ENCODE measurements at regions of chr4 and their contacts with region 1.

Region 1: GRCh38 chr4:138035781-138036258 is 206.3 kb downstream of the SLC7A11 start:
- DNase-seq: peak; percentile 80
- H3K4me3 ChIP-seq: no peak overlapping the region
- H3K27ac ChIP-seq: peak overlapping the region; percentile 76
- H3K4me1 ChIP-seq: peaks cover 35% of the 10 kb centered on the region
- H3K27me3 ChIP-seq: no peaks in the 10 kb centered on the region
- CTCF ChIP-seq: peak; percentile 36 to 68
- POLR2A ChIP-seq: no peak

Region 2: DNA sequence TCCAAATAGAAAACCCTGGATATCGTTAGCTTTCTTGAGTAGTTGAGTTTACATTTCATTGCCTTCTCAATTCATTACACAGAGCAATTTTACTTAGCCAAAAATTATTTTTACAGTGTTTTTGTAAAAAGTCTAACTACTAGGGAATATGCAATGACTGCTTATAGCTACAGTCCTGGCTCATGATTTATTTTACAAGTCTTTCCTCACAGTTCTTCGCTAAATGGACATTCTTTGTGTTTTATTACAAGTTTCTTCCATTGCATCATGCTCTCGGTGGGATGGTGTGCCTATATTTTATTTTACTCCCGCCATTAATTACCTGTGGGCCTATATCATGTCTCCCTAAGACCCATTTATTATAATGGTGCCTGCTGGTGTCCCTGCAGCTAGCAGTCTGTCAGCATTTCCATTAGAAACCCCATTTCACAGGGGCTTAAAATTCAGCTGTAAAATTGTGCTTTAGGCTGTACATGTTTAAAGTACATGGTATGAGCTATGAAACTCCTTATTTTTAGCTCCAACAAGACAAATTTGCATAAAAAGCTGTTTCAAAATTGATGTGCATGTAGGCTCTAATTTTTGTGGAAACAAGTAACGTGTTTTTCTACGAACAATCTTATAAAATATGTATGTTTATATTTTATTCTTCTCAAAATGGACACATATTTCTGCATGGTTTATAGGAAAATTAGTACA is 21.1 kb before region 1 on chr4:
- CTCF ChIA-PET with region 1: no interaction called
- POLR2A ChIA-PET with region 1: no interaction called
- dilution Hi-C with region 1: no loop called
- intact Hi-C with region 1: no loop called
- DNase-seq: no peak
- H3K4me3 ChIP-seq: no peak overlapping the region
- H3K27ac ChIP-seq: no peak overlapping the region
- H3K4me1 ChIP-seq: no peaks in the 10 kb centered on the region
- H3K27me3 ChIP-seq: no peaks in the 10 kb centered on the region
- CTCF ChIP-seq: no peak
- POLR2A ChIP-seq: no peak

Region 3: DNA sequence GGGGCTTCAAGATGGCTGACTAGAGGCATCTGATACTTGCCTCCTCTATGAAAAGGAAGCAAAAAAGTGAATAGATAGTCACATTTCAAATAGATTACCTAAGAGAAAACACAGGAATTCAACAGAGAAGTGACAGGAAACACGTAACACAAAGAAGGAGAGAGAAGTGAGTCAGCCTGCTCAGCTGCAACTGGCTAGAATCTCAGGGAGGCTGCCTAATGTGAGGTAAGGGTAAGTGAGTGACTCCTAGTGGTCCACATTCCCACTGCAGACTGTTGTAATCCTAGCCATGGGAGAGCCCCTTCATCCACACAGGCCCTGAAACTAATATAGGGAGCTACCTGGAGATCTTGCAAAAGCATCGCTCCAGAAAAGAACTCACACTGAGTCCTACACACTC is 27.1 kb after region 1 on chr4:
- CTCF ChIA-PET with region 1: interaction called, 34 read pairs
- POLR2A ChIA-PET with region 1: interaction called, 3 read pairs
- dilution Hi-C with region 1: no loop called
- intact Hi-C with region 1: loop called (anchors 1 kb)
- DNase-seq: peak; percentile 65
- H3K4me3 ChIP-seq: no peak overlapping the region
- H3K27ac ChIP-seq: peak overlapping the region; percentile 55
- H3K4me1 ChIP-seq: peaks cover 8% of the 10 kb centered on the region
- H3K27me3 ChIP-seq: no peaks in the 10 kb centered on the region
- CTCF ChIP-seq: peak; percentile 28 to 32
- POLR2A ChIP-seq: no peak

Region 4: GRCh38 chr4:138182838-138183426 is 147.1 kb after region 1 on chr4:
- CTCF ChIA-PET with region 1: interaction called, 82 read pairs
- POLR2A ChIA-PET with region 1: interaction called, 3 read pairs
- dilution Hi-C with region 1: no loop called
- intact Hi-C with region 1: loop called (anchors 1 kb)
- DNase-seq: peak; percentile 85
- H3K4me3 ChIP-seq: no peak overlapping the region
- H3K27ac ChIP-seq: no peak overlapping the region
- H3K4me1 ChIP-seq: peaks cover 14% of the 10 kb centered on the region
- H3K27me3 ChIP-seq: no peaks in the 10 kb centered on the region
- CTCF ChIP-seq: peak; percentile 43 to 48
- POLR2A ChIP-seq: no peak

Region 5: GRCh38 chr4:138522366-138522765 is 486.5 kb after region 1 on chr4:
- CTCF ChIA-PET with region 1: interaction called, 32 read pairs
- POLR2A ChIA-PET with region 1: no interaction called
- dilution Hi-C with region 1: no loop called
- intact Hi-C with region 1: loop called (anchors 1 kb)
- DNase-seq: peak; percentile 21
- H3K4me3 ChIP-seq: no peak overlapping the region
- H3K27ac ChIP-seq: no peak overlapping the region
- H3K4me1 ChIP-seq: no peaks in the 10 kb centered on the region
- H3K27me3 ChIP-seq: no peaks in the 10 kb centered on the region
- CTCF ChIP-seq: peak; percentile 27 to 40
- POLR2A ChIP-seq: no peak

Region 6: DNA sequence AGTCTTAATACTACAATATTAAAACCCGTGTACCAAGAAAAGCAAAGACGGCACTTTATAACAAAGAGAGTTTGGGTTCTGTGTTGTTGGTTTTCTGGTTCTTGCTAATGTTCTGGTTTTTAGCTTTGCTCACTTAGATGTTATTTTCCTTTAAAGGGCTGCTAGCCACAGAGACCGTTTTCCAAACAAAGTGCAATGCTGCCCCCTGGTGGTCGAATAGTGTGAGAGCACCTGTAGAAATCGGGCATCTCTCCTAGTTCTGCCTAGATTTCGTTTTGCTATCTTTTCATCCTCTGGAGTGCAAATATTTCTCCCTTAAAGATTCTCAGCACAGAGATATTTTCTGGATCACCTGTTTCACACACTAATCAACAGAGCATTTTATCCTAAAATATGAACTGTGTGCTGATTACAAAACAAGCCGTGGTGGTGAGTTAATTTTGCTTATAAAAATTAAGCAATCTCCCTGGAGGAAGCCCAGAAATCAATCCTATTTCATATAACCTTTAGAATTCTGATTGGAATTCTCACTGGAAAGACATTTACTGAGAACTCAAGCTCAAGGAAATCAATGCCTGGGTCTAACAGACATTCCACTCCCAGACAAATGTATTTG is 645.3 kb after region 1 on chr4:
- CTCF ChIA-PET with region 1: interaction called, 32 read pairs
- POLR2A ChIA-PET with region 1: no interaction called
- dilution Hi-C with region 1: no loop called
- intact Hi-C with region 1: loop called (anchors 1 kb)
- DNase-seq: peak; percentile 58
- H3K4me3 ChIP-seq: no peak overlapping the region
- H3K27ac ChIP-seq: no peak overlapping the region
- H3K4me1 ChIP-seq: no peaks in the 10 kb centered on the region
- H3K27me3 ChIP-seq: peaks cover 24 to 48% of the 10 kb centered on the region in 2 experiments
- CTCF ChIP-seq: peak; percentile 72 to 76
- POLR2A ChIP-seq: no peak

Measured in endothelial cell of umbilical vein (primary cell).